Activated CD8-positive, alpha-beta T cell treated with anti-CD3 and anti-CD28 coated beads for 36 hours (primary cell): ENCODE measurements at regions of chr15 and their contacts with region 1.

Region 1: DNA sequence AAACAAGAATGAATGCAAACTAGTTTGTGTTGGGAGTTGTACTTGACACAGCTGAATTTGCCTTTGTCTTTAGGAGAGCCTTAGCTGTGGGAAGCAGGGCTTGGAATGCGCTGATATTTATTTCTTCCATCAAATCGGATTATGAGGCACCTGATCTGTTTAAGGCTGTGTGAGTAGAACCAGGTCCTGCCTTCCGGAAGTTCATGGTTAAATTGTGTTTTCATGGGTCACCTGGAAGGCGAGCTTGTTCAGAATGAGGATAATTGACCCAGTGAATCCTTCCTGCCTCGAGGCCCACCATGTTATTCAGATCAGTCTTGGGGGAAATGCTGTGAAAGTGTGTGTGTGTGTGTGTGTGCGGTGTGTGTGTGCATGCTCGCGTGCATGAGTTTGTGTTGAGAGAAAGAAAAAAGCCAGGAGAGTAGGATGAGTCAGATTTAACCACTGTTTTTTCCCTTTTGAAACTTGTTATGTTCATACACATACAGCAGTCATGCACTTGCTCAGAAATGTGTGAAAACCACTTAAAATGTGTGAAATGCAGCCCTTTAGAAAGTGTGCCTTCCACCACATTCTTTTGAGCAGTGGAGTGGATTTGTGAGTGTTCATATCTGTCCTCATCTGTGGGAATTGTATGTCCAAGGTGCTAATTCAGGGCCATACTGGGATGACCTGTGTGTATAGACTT is 36.7 kb downstream of the SMAD3 start:
- DNase-seq: peak; percentile 68
- ATAC-seq: peak; percentile 52
- H3K4me3 Mint-ChIP-seq: no peak overlapping the region
- H3K27ac Mint-ChIP-seq: no peak overlapping the region
- H3K4me1 Mint-ChIP-seq: peaks cover 29% of the 10 kb centered on the region
- H3K27me3 Mint-ChIP-seq: no peaks in the 10 kb centered on the region
- CTCF ChIP-seq: no peak

Region 2: DNA sequence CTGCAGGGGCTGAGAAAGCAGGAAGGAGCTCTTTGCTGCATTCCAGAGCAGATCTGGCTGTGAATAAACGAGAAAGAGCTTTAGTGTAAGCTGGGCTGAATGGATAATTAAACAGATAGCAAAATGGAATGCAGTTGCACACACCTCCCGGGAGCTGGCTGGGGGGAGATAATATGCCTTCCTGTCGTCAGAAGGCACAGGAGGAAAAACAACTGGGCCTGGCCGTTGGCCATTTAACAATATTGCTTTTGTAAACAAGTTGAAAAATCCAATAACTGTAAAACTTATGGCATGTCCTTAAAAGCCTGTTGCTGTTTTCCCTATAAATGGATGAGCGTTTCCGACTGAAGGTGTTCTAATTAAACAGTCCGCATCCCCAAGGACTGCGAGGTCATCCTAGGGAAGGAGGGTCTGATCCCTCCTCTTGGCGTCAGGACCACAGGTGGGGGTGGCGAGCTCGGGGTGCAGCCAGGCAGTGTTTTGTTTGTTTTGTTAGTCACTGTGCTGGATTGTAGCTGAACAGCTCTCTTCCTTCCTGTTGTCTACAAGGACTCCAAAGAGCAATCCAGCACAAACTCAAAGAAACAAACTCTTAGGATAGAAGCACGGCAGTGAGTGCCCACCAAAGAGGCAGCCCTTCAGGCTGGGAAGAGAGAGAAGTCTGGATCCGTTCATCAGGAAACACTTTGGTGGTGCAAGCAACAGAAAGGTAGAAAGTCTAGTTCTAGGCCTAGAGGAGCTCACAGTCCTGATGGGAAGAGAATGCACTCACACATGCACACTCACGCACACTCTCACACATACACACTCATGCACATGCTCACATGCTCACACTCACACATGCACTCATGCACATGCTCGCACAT is 170.1 kb before region 1 on chr15:
- CTCF ChIA-PET with region 1: no interaction called
- POLR2A ChIA-PET with region 1: no interaction called
- intact Hi-C with region 1: no loop called
- DNase-seq: no peak
- ATAC-seq: no peak
- H3K4me3 Mint-ChIP-seq: no peak overlapping the region
- H3K27ac Mint-ChIP-seq: no peak overlapping the region
- H3K4me1 Mint-ChIP-seq: peaks cover 2% of the 10 kb centered on the region
- H3K27me3 Mint-ChIP-seq: peaks cover 5% of the 10 kb centered on the region
- CTCF ChIP-seq: no peak

Region 3: GRCh38 chr15:67065444-67066093 is 36.5 kb before region 1 on chr15 and contains the start of gene SMAD3:
- CTCF ChIA-PET with region 1: interaction called, 4 read pairs
- POLR2A ChIA-PET with region 1: interaction called, 37 read pairs
- intact Hi-C with region 1: loop called (anchors 5 kb)
- DNase-seq: peak; percentile 80
- ATAC-seq: peak; percentile 51
- H3K4me3 Mint-ChIP-seq: peak within 1 kb of the TSS; percentile 92
- H3K27ac Mint-ChIP-seq: peak within 1 kb of the TSS; percentile 93
- H3K4me1 Mint-ChIP-seq: peaks cover 44% of the 10 kb centered on the region
- H3K27me3 Mint-ChIP-seq: peaks cover 15% of the 10 kb centered on the region
- CTCF ChIP-seq: no peak
- total RNA-seq, gene SMAD3: 22.3 to 24.7 TPM

Region 4: GRCh38 chr15:67085818-67086636 is 16.0 kb before region 1 on chr15:
- CTCF ChIA-PET with region 1: interaction called, 46 read pairs
- POLR2A ChIA-PET with region 1: interaction called, 51 read pairs
- intact Hi-C with region 1: loop called (anchors 1 kb)
- DNase-seq: peak; percentile 79
- ATAC-seq: peak; percentile 50
- H3K4me3 Mint-ChIP-seq: peak overlapping the region; percentile 32
- H3K27ac Mint-ChIP-seq: peak overlapping the region; percentile 85
- H3K4me1 Mint-ChIP-seq: peaks cover 95% of the 10 kb centered on the region
- H3K27me3 Mint-ChIP-seq: no peaks in the 10 kb centered on the region
- CTCF ChIP-seq: no peak

Region 5: GRCh38 chr15:67120839-67121643 is 19.0 kb after region 1 on chr15:
- CTCF ChIA-PET with region 1: interaction called, 5 read pairs
- POLR2A ChIA-PET with region 1: interaction called, 24 read pairs
- intact Hi-C with region 1: no loop called
- DNase-seq: peak; percentile 93
- ATAC-seq: peak; percentile 94
- H3K4me3 Mint-ChIP-seq: peak overlapping the region; percentile 65
- H3K27ac Mint-ChIP-seq: peak overlapping the region; percentile 97
- H3K4me1 Mint-ChIP-seq: peaks cover 76% of the 10 kb centered on the region
- H3K27me3 Mint-ChIP-seq: no peaks in the 10 kb centered on the region
- CTCF ChIP-seq: no peak

Region 6: GRCh38 chr15:67146875-67147381 is 44.9 kb after region 1 on chr15:
- CTCF ChIA-PET with region 1: interaction called, 3 read pairs
- POLR2A ChIA-PET with region 1: interaction called, 3 read pairs
- intact Hi-C with region 1: loop called (anchors 5 kb)
- DNase-seq: peak; percentile 46
- ATAC-seq: peak; percentile 48
- H3K4me3 Mint-ChIP-seq: peak overlapping the region; percentile 31
- H3K27ac Mint-ChIP-seq: peak overlapping the region; percentile 84
- H3K4me1 Mint-ChIP-seq: peaks cover 75% of the 10 kb centered on the region
- H3K27me3 Mint-ChIP-seq: no peaks in the 10 kb centered on the region
- CTCF ChIP-seq: no peak

Region 7: DNA sequence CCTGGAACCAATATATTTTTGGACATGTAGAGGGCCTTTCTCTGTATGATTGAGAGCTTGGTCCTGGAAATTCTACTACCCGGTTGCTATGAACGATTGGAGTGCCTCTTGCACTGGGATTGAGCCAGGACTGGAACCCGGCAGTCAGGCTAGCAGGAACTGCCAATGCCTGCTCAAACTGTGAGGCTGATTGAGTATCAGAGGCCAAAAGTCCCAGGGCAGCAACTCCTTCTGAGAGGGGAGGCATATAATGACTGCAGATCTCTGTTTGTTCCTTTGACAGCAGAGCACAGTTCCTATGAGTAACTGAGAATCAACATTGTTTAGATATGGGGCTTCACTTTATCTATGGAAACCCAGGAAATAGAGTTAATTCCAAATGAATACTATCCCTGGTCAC is 165.4 kb after region 1 on chr15:
- CTCF ChIA-PET with region 1: no interaction called
- POLR2A ChIA-PET with region 1: no interaction called
- intact Hi-C with region 1: no loop called
- DNase-seq: no peak
- ATAC-seq: no peak
- H3K4me3 Mint-ChIP-seq: no peak overlapping the region
- H3K27ac Mint-ChIP-seq: no peak overlapping the region
- H3K4me1 Mint-ChIP-seq: no peaks in the 10 kb centered on the region
- H3K27me3 Mint-ChIP-seq: no peaks in the 10 kb centered on the region
- CTCF ChIP-seq: no peak